SK-N-SH (cell line): ENCODE measurements at regions of chrX and their contacts with region 1.

Region 1: DNA sequence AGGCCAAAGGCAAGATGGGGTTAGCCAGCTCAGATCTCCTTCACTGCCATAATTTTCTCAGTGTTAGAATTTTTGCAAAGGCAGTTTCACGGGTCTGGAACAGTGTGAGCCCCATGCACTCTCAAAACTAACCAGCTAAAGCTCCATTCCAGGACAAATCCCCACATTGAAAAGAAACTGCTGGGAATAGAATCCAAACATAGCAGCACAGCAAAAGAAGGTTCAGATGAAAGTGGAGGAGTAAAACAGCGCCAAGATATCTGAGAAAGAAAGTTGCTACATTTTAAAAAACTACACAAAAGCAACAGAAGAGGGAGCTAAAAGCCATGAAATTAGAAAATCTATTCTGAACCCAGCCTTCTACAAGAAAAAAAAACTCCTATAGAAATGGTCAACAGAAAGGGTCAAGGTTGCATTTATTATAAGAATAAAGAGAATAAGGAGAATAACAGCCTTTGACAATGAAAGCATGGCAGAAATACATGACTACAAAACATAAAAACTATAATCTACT is 39.6 kb upstream of the SLC7A3 start:
- DNase-seq: peak; percentile 17
- H3K4me3 ChIP-seq: no peak overlapping the region
- H3K27ac ChIP-seq: no peak overlapping the region
- H3K4me1 ChIP-seq: no peaks in the 10 kb centered on the region
- H3K27me3 ChIP-seq: no peaks in the 10 kb centered on the region; the same call in 1 of the 2 replicates
- CTCF ChIP-seq: peak; percentile 64
- EP300 ChIP-seq: no peak
- RAD21 ChIP-seq: peak; percentile 65

Region 2: GRCh38 chrX:70324326-70324725 is 646.2 kb before region 1 on chrX:
- CTCF ChIA-PET with region 1: no interaction called
- POLR2A ChIA-PET with region 1: no interaction called
- DNase-seq: no peak
- H3K4me3 ChIP-seq: no peak overlapping the region
- H3K27ac ChIP-seq: no peak overlapping the region
- H3K4me1 ChIP-seq: no peaks in the 10 kb centered on the region
- H3K27me3 ChIP-seq: no peaks in the 10 kb centered on the region
- CTCF ChIP-seq: no peak
- EP300 ChIP-seq: no peak
- RAD21 ChIP-seq: no peak

Region 3: GRCh38 chrX:71178908-71179307 is 208.4 kb after region 1 on chrX:
- CTCF ChIA-PET with region 1: interaction called, 17 read pairs
- POLR2A ChIA-PET with region 1: no interaction called
- DNase-seq: peak; percentile 65
- H3K4me3 ChIP-seq: no peak overlapping the region
- H3K27ac ChIP-seq: no peak overlapping the region
- H3K4me1 ChIP-seq: peaks cover 0 to 6% of the 10 kb centered on the region in 2 experiments; a peak in 1 of 4 replicates
- H3K27me3 ChIP-seq: no peaks in the 10 kb centered on the region; the same call in 1 of the 2 replicates
- CTCF ChIP-seq: peak; percentile 80
- EP300 ChIP-seq: no peak
- RAD21 ChIP-seq: peak; percentile 88

Region 4: GRCh38 chrX:71254092-71254941 is 283.8 kb after region 1 on chrX and contains the start of gene ZMYM3:
- CTCF ChIA-PET with region 1: no interaction called
- POLR2A ChIA-PET with region 1: no interaction called
- DNase-seq: peak; percentile 96
- H3K4me3 ChIP-seq: peak within 1 kb of the TSS; percentile 86 to 87
- H3K27ac ChIP-seq: peak within 1 kb of the TSS; percentile 53 to 81
- H3K4me1 ChIP-seq: peaks cover 9 to 12% of the 10 kb centered on the region in 2 experiments; a peak in 2 of 4 replicates
- H3K27me3 ChIP-seq: no peaks in the 10 kb centered on the region
- CTCF ChIP-seq: no peak
- EP300 ChIP-seq: no peak
- RAD21 ChIP-seq: no peak
- polyA plus RNA-seq, gene ZMYM3: 30.4 and 31.4 TPM in 2 replicates